Mammary epithelial cell (primary cell): ENCODE measurements at regions of chr1 and their contacts with region 1.

Region 1: DNA sequence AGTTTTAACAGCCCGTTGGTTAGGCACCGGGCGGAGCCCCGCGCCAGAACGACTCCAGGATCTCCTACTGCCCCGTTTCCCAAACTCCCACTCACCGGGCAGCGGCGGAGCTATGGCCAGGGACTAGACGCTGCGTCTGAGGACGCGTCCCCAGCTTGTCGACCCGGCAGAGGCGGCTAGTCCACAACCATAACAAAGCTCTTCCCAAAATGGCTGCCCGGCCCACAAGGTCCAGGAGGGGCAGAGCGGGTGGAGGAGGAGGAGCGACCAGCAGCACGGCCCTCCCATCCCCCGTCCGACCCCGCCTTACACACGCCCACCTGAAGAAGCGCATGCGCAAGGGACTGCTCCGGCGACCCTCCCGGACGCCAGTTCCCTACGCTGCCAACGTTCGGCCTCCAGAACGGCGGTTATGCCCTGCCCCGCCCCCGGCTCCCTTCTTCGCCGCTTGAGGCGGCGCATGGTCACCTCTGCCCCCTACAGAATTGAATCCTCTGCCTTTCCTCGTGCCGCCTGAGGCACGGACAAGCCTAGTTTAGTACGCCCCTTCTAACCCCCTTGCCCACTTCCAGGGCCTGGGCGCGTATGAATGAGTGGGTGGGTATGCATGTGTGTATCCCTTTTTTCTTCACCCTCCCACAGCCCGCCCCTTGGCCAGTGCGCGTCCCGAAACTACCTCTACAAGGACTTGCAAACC is at the start of gene GPBP1L1:
- DNase-seq: peak; percentile 93
- H3K4me3 ChIP-seq: peak within 1 kb of the TSS; percentile 94 to 99 (median 97)
- H3K27ac ChIP-seq: peak within 1 kb of the TSS; percentile 93
- H3K4me1 ChIP-seq: peaks cover 9% of the 10 kb centered on the region
- H3K27me3 ChIP-seq: no peaks in the 10 kb centered on the region
- CTCF ChIP-seq: no peak
- total RNA-seq, gene GPBP1L1: 109 to 119 TPM

Region 2: GRCh38 chr1:45521398-45522323 is 164.8 kb before region 1 on chr1 and contains the start of gene PRDX1:
- CTCF ChIA-PET with region 1: no interaction called
- dilution Hi-C with region 1: no loop called
- in situ Hi-C with region 1: no loop called
- intact Hi-C with region 1: loop called (anchors 5 kb)
- DNase-seq: peak; percentile 97
- H3K4me3 ChIP-seq: peak within 1 kb of the TSS; percentile 85 to 96 (median 87)
- H3K27ac ChIP-seq: peak within 1 kb of the TSS; percentile 87
- H3K4me1 ChIP-seq: peaks cover 16% of the 10 kb centered on the region
- H3K27me3 ChIP-seq: no peaks in the 10 kb centered on the region
- CTCF ChIP-seq: peak; percentile 6 to 12
- total RNA-seq, gene PRDX1: 273 to 406 TPM

Region 3: DNA sequence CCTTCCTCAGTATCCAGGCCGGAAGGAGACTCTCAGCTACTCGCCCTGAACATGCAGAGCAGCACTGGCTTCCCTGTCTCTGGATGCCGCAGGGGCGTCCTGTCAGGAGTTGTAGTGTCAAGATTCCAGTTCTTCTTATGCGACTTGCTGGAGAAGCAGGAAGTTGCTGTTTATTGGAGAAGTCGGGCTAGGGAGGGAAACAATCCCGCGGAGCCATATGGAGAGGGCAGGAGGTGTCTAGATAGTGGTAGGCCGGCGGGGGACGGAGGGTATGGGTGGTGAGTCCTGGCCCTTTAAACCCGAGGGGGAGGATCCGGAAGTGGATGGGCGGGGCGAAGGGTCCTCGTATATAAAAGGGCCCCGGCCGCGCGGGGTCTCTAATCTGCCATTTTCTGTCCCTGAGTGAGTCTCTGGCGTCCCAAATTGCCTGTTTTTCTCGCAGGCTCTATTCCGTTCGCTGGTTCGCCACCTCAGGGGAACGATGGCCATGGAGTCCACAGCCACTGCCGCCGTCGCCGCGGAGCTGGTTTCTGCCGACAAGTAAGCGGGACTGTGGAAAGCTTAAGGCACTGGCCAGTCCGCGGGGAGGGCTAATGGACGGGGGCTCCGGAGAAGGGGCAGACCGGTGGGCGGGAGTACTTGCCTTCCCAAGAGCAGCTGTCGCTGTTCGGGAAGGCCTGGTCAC is 102.7 kb before region 1 on chr1 and contains the start of gene NASP:
- CTCF ChIA-PET with region 1: no interaction called
- dilution Hi-C with region 1: no loop called
- in situ Hi-C with region 1: no loop called
- intact Hi-C with region 1: loop called (anchors 1 kb)
- DNase-seq: peak; percentile 83
- H3K4me3 ChIP-seq: peak within 1 kb of the TSS; percentile 45 to 97 (median 69)
- H3K27ac ChIP-seq: peak within 1 kb of the TSS; percentile 89
- H3K4me1 ChIP-seq: peaks cover 14% of the 10 kb centered on the region
- H3K27me3 ChIP-seq: no peaks in the 10 kb centered on the region
- CTCF ChIP-seq: no peak
- total RNA-seq, gene NASP: 17.2 to 82.2 TPM

Region 4: DNA sequence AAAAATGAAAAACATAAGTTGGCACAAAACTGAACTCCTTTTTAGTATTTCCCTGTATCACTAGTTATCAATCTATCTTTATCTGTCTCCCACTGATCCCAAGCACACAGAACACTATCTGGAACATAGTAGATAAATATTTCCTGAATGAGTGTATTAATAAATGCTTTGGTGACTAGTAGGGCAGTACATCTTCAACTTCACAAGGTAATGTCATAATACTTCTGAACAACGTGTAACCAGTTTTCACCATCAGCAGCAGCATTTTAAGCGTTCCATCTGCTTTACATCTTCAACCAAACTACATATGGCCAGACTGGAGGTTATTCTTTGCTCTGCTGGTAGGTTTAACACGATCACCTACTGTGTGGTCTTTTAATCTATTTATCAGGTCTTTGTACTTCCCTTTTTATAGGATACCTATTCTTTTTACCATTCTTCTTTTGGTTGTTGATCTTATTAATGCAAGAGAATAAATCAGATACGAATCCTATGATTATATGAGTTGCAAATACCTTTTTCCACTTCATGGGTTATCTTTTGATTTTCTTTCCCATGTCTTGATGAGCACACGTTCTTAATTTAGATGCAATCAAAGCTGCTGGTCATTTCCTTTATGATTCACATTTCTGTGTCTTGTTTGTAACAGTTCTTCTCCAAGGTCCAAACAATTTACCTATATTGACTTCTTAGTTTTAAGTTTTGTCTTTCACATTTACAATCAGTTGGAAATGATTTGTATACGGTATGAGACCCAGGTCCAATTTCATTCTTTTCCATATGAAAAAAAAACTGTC is 16.4 kb before region 1 on chr1:
- CTCF ChIA-PET with region 1: no interaction called
- dilution Hi-C with region 1: no loop called
- in situ Hi-C with region 1: no loop called
- intact Hi-C with region 1: no loop called
- DNase-seq: peak; percentile 14
- H3K4me3 ChIP-seq: no peak overlapping the region
- H3K27ac ChIP-seq: no peak overlapping the region
- H3K4me1 ChIP-seq: peaks cover 2% of the 10 kb centered on the region
- H3K27me3 ChIP-seq: no peaks in the 10 kb centered on the region
- CTCF ChIP-seq: no peak

Region 5: DNA sequence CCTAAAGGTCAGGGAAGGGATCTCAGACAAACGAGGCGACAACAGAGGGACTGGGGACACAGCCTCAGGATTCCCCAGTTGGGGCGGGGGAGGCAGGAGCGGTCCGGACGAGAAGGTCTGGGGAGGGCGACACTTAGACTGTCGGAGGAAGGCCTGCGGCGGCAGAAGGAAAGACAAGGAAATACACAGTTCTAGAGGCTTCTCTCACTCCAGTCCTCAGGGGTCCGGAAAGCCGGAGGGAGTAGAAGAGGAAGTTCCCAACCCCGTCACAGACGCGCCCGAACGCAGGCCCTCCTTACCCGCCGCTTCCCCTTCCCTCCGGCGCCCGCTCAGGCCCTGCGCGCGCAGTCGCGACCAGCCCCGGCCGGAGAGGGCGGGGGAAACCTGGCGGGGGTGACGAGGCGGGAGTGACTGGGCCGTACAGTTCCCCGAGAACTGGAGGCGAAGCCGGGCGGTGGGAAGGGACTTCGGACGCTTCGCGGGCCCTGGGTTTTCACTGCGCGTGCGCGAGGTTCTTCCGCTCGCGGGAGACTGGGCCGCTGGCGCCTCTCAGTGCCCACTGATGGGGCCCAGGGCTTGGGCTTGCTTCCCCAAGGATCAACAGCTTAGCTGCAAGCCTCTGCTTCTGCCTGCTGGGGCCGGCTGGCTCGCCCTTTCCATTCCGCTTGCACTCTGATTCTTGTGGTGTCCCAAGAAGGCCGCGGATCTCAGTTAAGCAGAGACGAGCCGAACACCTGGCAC is 64.0 kb after region 1 on chr1 and contains the start of gene IPP:
- CTCF ChIA-PET with region 1: no interaction called
- dilution Hi-C with region 1: no loop called
- in situ Hi-C with region 1: no loop called
- intact Hi-C with region 1: loop called (anchors 1 kb)
- DNase-seq: peak; percentile 98
- H3K4me3 ChIP-seq: peak within 1 kb of the TSS; percentile 57 to 68 (median 63)
- H3K27ac ChIP-seq: peak within 1 kb of the TSS; percentile 84
- H3K4me1 ChIP-seq: no peaks in the 10 kb centered on the region
- H3K27me3 ChIP-seq: no peaks in the 10 kb centered on the region
- CTCF ChIP-seq: peak in 1 of 2 donors; percentile 50
- total RNA-seq, gene IPP: 14.0 to 14.5 TPM

Region 6: GRCh38 chr1:45803301-45803780 is 116.9 kb after region 1 on chr1 and contains the start of gene MAST2:
- CTCF ChIA-PET with region 1: no interaction called
- dilution Hi-C with region 1: no loop called
- in situ Hi-C with region 1: no loop called
- intact Hi-C with region 1: loop called (anchors 2 kb)
- DNase-seq: peak; percentile 85
- H3K4me3 ChIP-seq: peak within 1 kb of the TSS; percentile 57 to 71 (median 70)
- H3K27ac ChIP-seq: peak within 1 kb of the TSS; percentile 88
- H3K4me1 ChIP-seq: peaks cover 16% of the 10 kb centered on the region
- H3K27me3 ChIP-seq: no peaks in the 10 kb centered on the region
- CTCF ChIP-seq: no peak
- total RNA-seq, gene MAST2: 32.8 to 40.3 TPM

Region 7: DNA sequence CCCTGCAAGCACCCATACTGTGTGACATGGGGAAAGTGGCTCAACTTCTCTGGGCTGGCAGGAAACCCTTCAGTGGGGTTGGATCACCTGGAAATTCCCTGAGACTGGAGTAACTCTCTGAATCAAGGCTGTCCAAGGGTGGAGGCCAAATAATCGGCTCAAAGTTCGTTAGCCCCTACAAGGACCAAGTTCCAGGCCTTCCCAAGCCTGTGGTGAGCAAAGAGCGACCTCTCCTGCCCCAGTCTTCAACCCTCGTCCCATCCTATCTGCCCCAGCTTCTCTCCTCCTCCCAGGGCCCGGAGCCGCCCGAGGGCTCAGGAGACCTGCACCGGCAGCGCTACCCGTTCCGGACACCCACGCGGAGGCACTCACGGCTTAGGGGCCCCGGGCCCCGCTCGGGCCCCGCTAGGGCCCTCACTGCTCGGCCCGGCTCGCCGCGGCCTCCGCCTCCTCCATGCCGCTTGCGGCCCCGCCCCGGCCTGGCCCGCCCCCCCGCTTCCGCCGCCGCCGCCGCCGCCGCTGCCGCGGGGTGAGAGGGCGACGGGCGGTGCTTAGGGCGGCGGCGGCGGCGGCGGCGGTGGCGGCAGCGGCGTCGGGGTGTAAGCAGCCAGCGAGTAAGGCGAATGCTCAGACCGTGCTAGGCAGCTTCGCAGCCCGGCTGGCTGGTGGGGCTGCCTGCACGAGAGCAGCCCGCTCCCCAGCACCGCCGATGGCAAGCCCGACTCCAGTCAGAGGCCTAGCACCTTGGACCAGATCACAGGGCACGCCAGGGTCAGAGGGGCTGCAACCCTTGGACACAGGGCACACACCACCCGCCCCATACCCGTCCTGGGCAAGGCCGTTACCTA is 511.7 kb after region 1 on chr1 and contains the start of gene POMGNT1:
- CTCF ChIA-PET with region 1: interaction called, 3 read pairs
- dilution Hi-C with region 1: no loop called
- in situ Hi-C with region 1: loop called in 1 of 2 experiments (anchors 25 kb)
- intact Hi-C with region 1: no loop called
- DNase-seq: peak; percentile 71
- H3K4me3 ChIP-seq: peak within 1 kb of the TSS; percentile 79 to 92 (median 91)
- H3K27ac ChIP-seq: peak within 1 kb of the TSS; percentile 69
- H3K4me1 ChIP-seq: peaks cover 19% of the 10 kb centered on the region
- H3K27me3 ChIP-seq: no peaks in the 10 kb centered on the region
- CTCF ChIP-seq: peak in 1 of 2 donors; percentile 38
- total RNA-seq, gene POMGNT1: 92.5 to 144 TPM

Region 8: DNA sequence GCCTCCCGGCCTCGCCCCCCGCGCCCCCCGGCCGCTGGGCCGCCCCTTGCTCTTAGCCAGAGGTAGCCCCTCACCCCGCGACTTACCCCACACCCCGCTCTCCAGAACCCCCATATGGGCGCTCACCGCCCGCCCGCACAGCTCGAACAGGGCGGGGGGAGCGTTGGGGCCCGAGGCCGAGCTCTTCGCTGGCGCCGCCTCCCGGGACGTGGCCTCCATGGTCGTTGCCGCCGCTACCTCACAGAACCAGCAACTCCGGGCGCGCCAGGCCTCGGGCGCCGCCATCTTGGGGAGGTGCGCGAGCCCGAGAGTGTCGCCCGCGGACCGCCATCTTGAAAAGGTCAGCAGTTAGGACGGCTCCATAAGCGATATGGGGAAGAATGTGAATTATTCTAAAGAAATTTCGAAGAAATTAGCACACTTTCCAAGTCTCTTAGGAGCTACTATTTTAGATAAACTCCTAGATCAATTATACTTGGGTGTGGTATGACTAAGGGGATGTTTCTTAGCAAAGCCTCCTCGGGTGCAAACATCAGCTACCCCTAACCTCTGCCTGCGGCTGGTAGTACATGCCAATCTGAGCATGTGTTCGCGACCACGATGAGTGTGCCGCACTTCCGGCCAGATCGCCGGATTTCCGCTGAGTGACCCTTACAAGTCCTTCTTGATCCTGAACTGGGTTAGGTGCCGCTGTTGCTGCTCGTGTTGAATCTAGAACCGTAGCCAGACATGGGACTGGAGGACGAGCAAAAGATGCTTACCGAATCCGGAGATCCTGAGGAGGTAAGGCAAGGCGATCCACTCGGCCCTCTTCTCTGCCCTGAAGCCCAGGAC is 616.8 kb after region 1 on chr1 and contains the starts of genes LRRC41 and UQCRH:
- CTCF ChIA-PET with region 1: no interaction called
- dilution Hi-C with region 1: no loop called
- in situ Hi-C with region 1: no loop called
- intact Hi-C with region 1: no loop called
- DNase-seq: peak; percentile 93
- H3K4me3 ChIP-seq: peak within 1 kb of the TSS; percentile 69 to 98 (median 94)
- H3K27ac ChIP-seq: peak within 1 kb of the TSS; percentile 92
- H3K4me1 ChIP-seq: peaks cover 24% of the 10 kb centered on the region
- H3K27me3 ChIP-seq: no peaks in the 10 kb centered on the region
- CTCF ChIP-seq: no peak
- total RNA-seq, gene LRRC41: 76.7 to 103 TPM
- total RNA-seq, gene UQCRH: 233 to 275 TPM